ENCODE measurements at regions of chr19 and their contacts with region 1.

Region 1: GRCh38 chr19:15379083-15379995 is at the start of gene AKAP8:
- DNase-seq: peak; percentile 96
- ATAC-seq: peak; percentile 89
- H3K4me3 ChIP-seq: peak within 1 kb of the TSS; percentile 83 to 100
- H3K27ac ChIP-seq: peak within 1 kb of the TSS; percentile 96
- H3K4me1 ChIP-seq: peaks cover 13 to 33% of the 10 kb centered on the region in 2 experiments
- H3K27me3 ChIP-seq: no peaks in the 10 kb centered on the region
- CTCF ChIP-seq: no peak
- POLR2A ChIP-seq: peak; percentile 42
- RAD21 ChIP-seq: no peak
- total RNA-seq, gene AKAP8: 50.6 TPM

Region 2: DNA sequence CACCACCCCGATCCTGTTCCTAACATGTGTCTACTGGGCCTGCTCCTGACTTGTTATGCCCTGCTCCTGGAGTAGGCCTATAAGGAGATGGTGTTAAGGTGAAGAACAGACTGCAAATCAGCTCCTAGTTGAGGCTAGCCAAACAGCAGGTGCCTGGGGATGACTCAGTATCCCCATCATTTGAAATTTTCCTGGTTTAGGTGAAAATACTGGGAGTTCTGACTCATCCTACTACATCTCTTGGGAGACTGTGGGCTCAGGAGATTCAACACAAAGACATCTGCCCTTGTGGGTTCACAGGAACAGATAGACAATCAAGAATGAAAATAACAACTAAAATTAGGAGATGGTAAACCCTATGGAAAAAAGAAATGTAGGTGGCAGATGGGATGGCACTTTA is 88.2 kb before region 1 on chr19:
- CTCF ChIA-PET with region 1: no interaction called
- POLR2A ChIA-PET with region 1: no interaction called
- RAD21 ChIA-PET with region 1: no interaction called
- intact Hi-C with region 1: no loop called
- DNase-seq: no peak
- ATAC-seq: no peak
- H3K4me3 ChIP-seq: no peak overlapping the region
- H3K27ac ChIP-seq: no peak overlapping the region
- H3K4me1 ChIP-seq: peaks cover 0 to 3% of the 10 kb centered on the region in 2 experiments; a peak in 1 of 4 replicates
- H3K27me3 ChIP-seq: no peaks in the 10 kb centered on the region
- CTCF ChIP-seq: no peak
- POLR2A ChIP-seq: no peak
- RAD21 ChIP-seq: no peak

Region 3: GRCh38 chr19:15418588-15419412 is 39.5 kb after region 1 on chr19 and contains the start of gene AKAP8L:
- CTCF ChIA-PET with region 1: interaction called, 11 read pairs
- POLR2A ChIA-PET with region 1: interaction called, 22 read pairs
- RAD21 ChIA-PET with region 1: interaction called in 1 of 2 experiments, 3 read pairs
- intact Hi-C with region 1: loop called (anchors 2 kb)
- DNase-seq: peak; percentile 100
- ATAC-seq: peak; percentile 96
- H3K4me3 ChIP-seq: peak within 1 kb of the TSS; percentile 96 to 100
- H3K27ac ChIP-seq: peak within 1 kb of the TSS; percentile 89
- H3K4me1 ChIP-seq: peaks cover 15 to 16% of the 10 kb centered on the region in 2 experiments; a peak in 3 of 4 replicates
- H3K27me3 ChIP-seq: no peaks in the 10 kb centered on the region
- CTCF ChIP-seq: peak; percentile 69 to 78 (median 74)
- POLR2A ChIP-seq: peak; percentile 86
- RAD21 ChIP-seq: peak; percentile 71
- total RNA-seq, gene AKAP8L: 106 TPM

Region 4: GRCh38 chr19:15532779-15533521 is 153.6 kb after region 1 on chr19:
- CTCF ChIA-PET with region 1: no interaction called
- POLR2A ChIA-PET with region 1: no interaction called
- RAD21 ChIA-PET with region 1: no interaction called
- intact Hi-C with region 1: no loop called
- DNase-seq: peak; percentile 49
- ATAC-seq: peak; percentile 99
- H3K4me3 ChIP-seq: no peak overlapping the region
- H3K27ac ChIP-seq: no peak overlapping the region
- H3K4me1 ChIP-seq: peaks cover 9 to 29% of the 10 kb centered on the region in 2 experiments
- H3K27me3 ChIP-seq: no peaks in the 10 kb centered on the region
- CTCF ChIP-seq: peak in 1 of 3 experiments; percentile 11; a peak in 1 of 6 replicates
- POLR2A ChIP-seq: no peak
- RAD21 ChIP-seq: peak; percentile 59